ENCODE measurements at regions of chr6 and their contacts with region 1.

Region 1: DNA sequence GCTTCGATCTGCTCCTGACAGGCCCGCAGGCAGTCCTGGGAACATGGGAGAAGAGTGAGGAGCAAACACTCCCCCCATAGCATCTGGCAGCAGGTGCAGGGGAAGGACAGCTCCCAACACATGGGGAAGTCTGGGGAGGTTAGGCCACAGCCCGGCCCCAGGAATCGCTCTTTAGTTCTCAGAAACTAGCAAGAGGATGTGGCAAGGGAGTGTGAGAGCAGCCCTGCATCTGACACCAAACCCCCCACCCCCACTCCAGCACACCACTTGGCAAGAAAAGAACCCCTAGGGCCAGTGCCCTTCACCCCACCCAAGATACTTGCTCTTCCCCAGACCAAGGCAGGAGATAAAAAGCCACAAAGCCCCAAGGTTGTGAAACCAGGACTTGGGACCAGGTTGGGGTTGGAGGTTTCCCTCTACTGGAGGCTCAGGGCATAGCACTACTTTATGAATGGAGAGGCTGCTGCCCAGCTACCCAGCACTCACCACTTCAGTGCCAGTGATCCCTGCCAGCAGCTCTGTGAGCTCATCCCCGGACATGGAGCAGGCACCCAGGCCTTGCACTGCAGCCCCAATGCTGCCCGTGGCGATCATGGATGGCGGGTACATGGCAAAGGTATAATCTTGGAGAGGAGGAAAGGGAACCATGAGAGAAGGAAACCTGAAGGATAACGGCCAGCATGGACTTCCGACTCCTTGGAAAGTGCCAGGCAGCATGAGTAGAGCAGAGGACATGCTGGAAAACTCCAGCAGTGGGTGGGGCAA is 5.4 kb downstream of the CCND3 start:
- DNase-seq: peak; percentile 84 to 95 (median 92)
- H3K4me3 ChIP-seq: no peak overlapping the region
- H3K27ac ChIP-seq: peak overlapping the region; percentile 32 to 97 (median 56)
- H3K4me1 ChIP-seq: peaks cover 28 to 51% of the 10 kb centered on the region in 2 donors
- H3K27me3 ChIP-seq: no peaks in the 10 kb centered on the region
- CTCF ChIP-seq: peak; percentile 80 to 95 (median 91)
- POLR2A ChIP-seq: peak in 1 of 2 donors; percentile 48

Region 2: DNA sequence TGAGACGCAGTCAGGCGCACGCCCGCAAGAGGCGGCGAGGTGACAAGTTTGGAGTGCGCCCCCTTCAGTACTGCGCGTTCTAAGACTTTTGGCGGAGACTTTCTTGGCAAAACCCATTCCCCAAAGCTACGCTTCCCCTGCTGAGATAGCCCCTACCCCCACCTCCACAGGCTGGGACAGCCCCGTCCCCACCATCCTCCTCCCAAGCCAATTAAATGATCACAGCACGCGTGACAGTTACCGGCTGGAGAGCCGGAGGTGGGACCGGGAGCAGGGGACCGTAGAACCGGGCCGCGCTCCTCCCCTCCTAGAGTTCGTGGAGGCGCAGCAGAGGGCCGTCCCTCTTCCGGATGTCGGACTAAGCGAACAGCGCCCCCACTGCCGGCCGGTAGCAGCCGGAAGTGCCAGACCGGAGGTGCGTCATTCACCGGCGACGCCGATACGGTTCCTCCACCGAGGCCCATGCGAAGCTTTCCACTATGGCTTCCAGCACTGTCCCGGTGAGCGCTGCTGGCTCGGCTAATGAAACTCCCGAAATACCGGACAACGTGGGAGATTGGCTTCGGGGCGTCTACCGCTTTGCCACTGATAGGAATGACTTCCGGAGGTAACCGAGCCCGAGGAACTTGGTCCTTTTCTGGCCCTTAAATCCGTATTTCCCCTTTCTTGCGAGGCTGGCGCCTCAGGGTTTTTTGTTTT is 148.9 kb before region 1 on chr6 and contains the start of gene TOMM6:
- intact Hi-C with region 1: loop called (anchors 10 kb)
- DNase-seq: peak; percentile 94 to 98 (median 96)
- H3K4me3 ChIP-seq: peak within 1 kb of the TSS; percentile 56 to 100 (median 74)
- H3K27ac ChIP-seq: peak within 1 kb of the TSS; percentile 80 to 95 (median 92)
- H3K4me1 ChIP-seq: peaks cover 14 to 21% of the 10 kb centered on the region in 2 donors
- H3K27me3 ChIP-seq: no peaks in the 10 kb centered on the region
- CTCF ChIP-seq: peak; percentile 81 to 99 (median 94)
- POLR2A ChIP-seq: peak; percentile 74 to 93
- total RNA-seq, gene TOMM6: 146 to 349 (median 225) TPM

Region 3: DNA sequence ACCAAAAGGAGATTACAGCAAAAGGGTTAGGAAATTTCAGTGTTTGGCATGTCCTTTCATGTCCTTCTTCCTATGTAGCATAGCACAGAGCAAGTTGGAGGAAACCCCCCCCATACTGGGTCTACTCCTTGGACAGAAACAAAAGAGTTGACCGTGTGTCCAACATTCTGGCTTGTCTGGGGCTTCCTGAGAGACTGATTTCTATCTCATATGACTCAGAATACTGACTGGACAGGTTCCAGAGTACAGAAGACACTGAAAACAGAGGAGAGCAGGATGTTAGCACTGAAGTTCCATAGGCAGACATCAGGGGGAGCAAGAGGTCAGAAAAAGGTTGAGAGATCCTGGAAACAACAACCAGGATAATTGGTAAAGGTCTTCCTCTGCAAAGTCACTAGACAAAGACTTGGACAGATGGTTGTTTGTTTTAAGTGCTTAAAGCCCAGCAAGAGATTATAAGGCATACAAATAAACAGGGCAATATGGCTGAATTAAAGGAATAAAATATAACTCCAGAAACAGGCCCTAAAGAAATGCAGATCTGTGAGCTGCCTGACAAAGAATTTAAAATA is 89.5 kb before region 1 on chr6:
- intact Hi-C with region 1: loop called in 1 of 2 experiments (anchors 10 kb)
- DNase-seq: peak; percentile 76 to 91 (median 79)
- H3K4me3 ChIP-seq: no peak overlapping the region
- H3K27ac ChIP-seq: peak overlapping the region in 3 of 5 donors; percentile 33 to 69 (median 51)
- H3K4me1 ChIP-seq: peaks cover 0 to 9% of the 10 kb centered on the region in 2 donors
- H3K27me3 ChIP-seq: no peaks in the 10 kb centered on the region
- CTCF ChIP-seq: peak; percentile 73 to 95 (median 86)
- POLR2A ChIP-seq: no peak

Region 4: GRCh38 chr6:42043787-42044475 is 107.7 kb after region 1 on chr6:
- intact Hi-C with region 1: loop called (anchors 5 kb)
- DNase-seq: peak; percentile 87 to 95 (median 90)
- H3K4me3 ChIP-seq: peak overlapping the region in 1 of 4 donors; percentile 35
- H3K27ac ChIP-seq: peak overlapping the region in 3 of 5 donors; percentile 55 to 89 (median 75)
- H3K4me1 ChIP-seq: peaks cover 30 to 58% of the 10 kb centered on the region in 2 donors
- H3K27me3 ChIP-seq: no peaks in the 10 kb centered on the region
- CTCF ChIP-seq: peak; percentile 95 to 99 (median 98)
- POLR2A ChIP-seq: no peak